ENCODE measurements at regions of chr17 and their contacts with region 1.

Region 1: DNA sequence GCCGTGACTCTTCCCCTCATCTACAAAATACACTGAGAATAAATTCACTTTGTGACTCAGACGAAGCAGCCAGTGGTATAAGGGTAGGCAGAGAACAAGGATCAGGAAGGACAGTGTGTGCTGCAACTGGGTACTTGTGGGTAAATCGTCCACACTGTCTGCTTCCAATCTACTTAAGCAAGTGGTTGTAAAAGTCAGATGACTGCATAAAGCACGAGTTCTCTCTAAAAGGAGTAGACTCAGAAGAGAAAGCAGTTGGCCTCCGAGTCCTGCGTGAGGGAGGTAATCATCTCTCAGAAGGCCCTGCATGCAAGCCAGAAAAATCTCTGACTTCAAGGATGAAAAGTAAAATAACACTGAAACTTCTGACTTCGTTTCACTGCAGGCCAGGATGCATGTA is 43.1 kb downstream of the ANKFY1 start:
- DNase-seq: no peak
- ATAC-seq: no peak
- H3K4me3 ChIP-seq: no peak overlapping the region
- H3K4me3 Mint-ChIP-seq: no peak overlapping the region
- H3K27ac ChIP-seq: no peak overlapping the region
- H3K27ac Mint-ChIP-seq: peak overlapping the region in 1 of 2 donors; percentile 65
- H3K4me1 ChIP-seq: no peaks in the 10 kb centered on the region
- H3K4me1 Mint-ChIP-seq: peaks cover 1 to 2% (median 2%) of the 10 kb centered on the region in 3 donors
- H3K27me3 ChIP-seq: no peaks in the 10 kb centered on the region
- H3K27me3 Mint-ChIP-seq: no peaks in the 10 kb centered on the region

Region 2: DNA sequence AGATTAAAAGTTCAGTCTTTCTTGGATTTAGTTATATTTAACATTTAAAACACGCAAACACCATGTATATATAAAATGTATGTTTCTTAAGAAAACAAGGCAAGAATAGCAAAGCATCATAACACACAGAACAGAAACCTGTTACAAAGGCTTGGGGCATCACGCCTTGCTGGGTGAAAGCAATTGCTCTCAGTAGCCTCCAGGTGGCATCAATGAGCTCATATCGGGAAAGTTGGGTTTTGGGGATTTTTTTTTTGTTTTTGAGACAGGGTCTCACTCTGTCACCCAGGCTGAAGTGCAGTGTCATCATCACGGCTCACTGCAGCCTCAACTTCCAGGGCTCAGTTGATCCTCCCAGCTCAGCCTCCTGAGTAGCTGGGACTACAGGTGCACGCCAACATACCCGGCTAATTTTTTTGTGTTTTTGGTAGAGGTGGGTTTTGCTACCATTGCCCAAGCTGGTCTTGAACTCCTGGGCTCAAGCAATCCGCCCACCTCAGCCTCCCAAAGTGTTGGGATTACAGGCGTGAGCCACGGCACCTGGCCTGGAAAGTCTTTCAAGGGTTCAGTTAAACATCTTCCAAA is 20.7 kb before region 1 on chr17:
- CTCF ChIA-PET with region 1: interaction called in 1 of 2 experiments, 13 read pairs
- POLR2A ChIA-PET with region 1: no interaction called
- DNase-seq: peak in 17 of 35 experiments; percentile 9 to 71 (median 22)
- ATAC-seq: peak in 3 of 4 experiments; percentile 35 to 57 (median 46)
- H3K4me3 ChIP-seq: no peak overlapping the region
- H3K4me3 Mint-ChIP-seq: no peak overlapping the region
- H3K27ac ChIP-seq: no peak overlapping the region
- H3K27ac Mint-ChIP-seq: no peak overlapping the region
- H3K4me1 ChIP-seq: no peaks in the 10 kb centered on the region
- H3K4me1 Mint-ChIP-seq: peaks cover 0 to 2% (median 0%) of the 10 kb centered on the region in 3 donors
- H3K27me3 ChIP-seq: no peaks in the 10 kb centered on the region
- H3K27me3 Mint-ChIP-seq: no peaks in the 10 kb centered on the region

Region 3: GRCh38 chr17:4241539-4241938 is 20.9 kb after region 1 on chr17:
- CTCF ChIA-PET with region 1: no interaction called
- POLR2A ChIA-PET with region 1: no interaction called
- DNase-seq: no peak
- ATAC-seq: no peak
- H3K4me3 ChIP-seq: no peak overlapping the region
- H3K4me3 Mint-ChIP-seq: no peak overlapping the region
- H3K27ac ChIP-seq: no peak overlapping the region
- H3K27ac Mint-ChIP-seq: no peak overlapping the region
- H3K4me1 ChIP-seq: no peaks in the 10 kb centered on the region
- H3K4me1 Mint-ChIP-seq: peaks cover 15 to 21% (median 17%) of the 10 kb centered on the region in 3 donors
- H3K27me3 ChIP-seq: no peaks in the 10 kb centered on the region
- H3K27me3 Mint-ChIP-seq: no peaks in the 10 kb centered on the region

Region 4: DNA sequence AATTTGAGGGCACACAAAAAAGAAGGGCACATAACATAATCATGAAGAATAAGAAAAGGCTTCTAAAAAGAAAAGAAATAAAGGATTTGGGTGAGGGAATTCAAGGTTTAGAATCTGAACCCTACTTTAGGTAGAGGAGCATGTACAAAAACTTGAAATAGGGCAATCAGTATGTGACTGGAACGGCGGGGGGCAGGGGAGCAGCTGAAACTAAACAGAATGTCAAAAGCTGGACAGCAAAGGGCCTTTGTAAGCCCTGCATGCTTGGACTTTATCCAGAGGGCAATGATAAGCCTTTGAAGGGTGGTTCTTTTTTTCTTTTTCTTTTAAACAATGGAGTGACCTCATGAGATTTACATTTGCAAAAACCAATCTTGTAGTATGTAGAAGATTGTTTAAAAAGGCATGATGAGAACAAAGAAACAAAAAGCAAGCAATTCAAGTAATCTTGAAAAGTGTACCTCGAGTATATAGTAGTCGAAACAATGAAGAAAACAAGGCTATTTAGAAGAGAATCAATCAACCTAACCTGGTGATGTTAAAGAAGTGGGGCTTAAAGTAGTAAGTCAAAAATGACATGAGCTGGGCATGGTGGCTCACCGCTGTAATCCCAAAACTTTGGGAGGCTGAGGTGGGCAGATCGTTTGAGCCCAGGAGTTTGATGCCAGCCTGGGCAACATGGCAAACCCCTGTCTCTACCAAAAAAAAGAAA is 89.8 kb after region 1 on chr17:
- CTCF ChIA-PET with region 1: interaction called in 1 of 2 experiments, 10 read pairs
- POLR2A ChIA-PET with region 1: no interaction called
- DNase-seq: no peak
- ATAC-seq: no peak
- H3K4me3 ChIP-seq: no peak overlapping the region
- H3K4me3 Mint-ChIP-seq: peak overlapping the region in 1 of 3 donors; percentile 28
- H3K27ac ChIP-seq: no peak overlapping the region
- H3K27ac Mint-ChIP-seq: peak overlapping the region; percentile 51 to 59
- H3K4me1 ChIP-seq: peaks cover 0 to 7% of the 10 kb centered on the region in 2 experiments
- H3K4me1 Mint-ChIP-seq: peaks cover 67 to 76% (median 69%) of the 10 kb centered on the region in 3 donors
- H3K27me3 ChIP-seq: no peaks in the 10 kb centered on the region
- H3K27me3 Mint-ChIP-seq: no peaks in the 10 kb centered on the region

Region 5: DNA sequence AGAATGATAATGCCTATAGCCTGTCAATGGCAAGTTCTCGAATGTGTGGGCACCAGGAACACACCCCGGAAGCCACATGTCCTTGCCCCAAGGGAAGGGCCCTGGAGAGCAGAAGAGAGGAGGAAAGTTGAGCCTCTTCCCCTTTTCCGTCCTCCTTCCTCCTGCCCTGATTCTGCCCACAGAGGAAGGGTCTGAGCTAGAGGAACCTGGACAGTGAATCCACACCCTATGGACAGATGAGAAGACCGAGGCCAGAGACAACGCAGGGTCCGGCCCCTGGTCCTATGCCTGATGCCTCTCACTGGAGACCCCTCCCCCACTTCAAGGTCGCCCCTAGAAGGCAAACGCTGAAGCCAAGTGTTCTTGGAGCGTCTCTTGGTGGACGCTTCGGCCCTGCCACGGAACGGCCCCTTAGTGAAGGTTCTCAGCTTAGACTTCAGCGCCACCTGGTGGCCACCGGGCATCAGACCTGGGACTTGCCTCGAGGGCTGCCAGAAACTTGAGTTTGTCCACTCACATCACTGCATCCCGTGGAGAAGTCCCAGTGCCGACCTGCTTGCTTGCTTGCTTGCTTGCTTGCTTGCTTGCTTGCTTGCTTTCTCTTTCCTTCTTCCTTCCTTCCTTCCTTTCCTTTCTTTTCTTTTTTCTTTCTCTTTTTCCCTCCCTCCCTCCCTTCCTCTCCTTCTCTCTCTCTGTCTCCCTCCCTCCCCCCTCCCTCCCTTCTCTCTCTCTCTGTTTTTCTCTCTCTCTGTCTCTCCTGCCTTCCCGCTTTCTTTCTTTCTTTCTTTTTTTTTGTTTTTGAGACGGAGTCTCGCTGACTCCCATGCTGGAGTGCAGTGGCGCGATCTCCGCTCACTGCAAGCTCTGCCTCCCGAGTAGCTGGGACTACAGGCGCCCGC is 192.5 kb after region 1 on chr17:
- CTCF ChIA-PET with region 1: interaction called, 3 to 27 read pairs
- POLR2A ChIA-PET with region 1: no interaction called
- DNase-seq: peak; percentile 60 to 93 (median 86)
- ATAC-seq: peak; percentile 79 to 99 (median 94)
- H3K4me3 ChIP-seq: peak overlapping the region in 1 of 2 donors; percentile 11
- H3K4me3 Mint-ChIP-seq: peak overlapping the region; percentile 28 to 68 (median 68)
- H3K27ac ChIP-seq: no peak overlapping the region
- H3K27ac Mint-ChIP-seq: peak overlapping the region; percentile 28 to 55
- H3K4me1 ChIP-seq: peaks cover 0 to 8% of the 10 kb centered on the region in 2 experiments
- H3K4me1 Mint-ChIP-seq: peaks cover 4 to 7% (median 5%) of the 10 kb centered on the region in 3 donors
- H3K27me3 ChIP-seq: no peaks in the 10 kb centered on the region
- H3K27me3 Mint-ChIP-seq: no peaks in the 10 kb centered on the region

Measured in T-cell (primary cell).